WTC11 (cell line): ENCODE measurements at regions of chr6 and their contacts with region 1.

Region 1: DNA sequence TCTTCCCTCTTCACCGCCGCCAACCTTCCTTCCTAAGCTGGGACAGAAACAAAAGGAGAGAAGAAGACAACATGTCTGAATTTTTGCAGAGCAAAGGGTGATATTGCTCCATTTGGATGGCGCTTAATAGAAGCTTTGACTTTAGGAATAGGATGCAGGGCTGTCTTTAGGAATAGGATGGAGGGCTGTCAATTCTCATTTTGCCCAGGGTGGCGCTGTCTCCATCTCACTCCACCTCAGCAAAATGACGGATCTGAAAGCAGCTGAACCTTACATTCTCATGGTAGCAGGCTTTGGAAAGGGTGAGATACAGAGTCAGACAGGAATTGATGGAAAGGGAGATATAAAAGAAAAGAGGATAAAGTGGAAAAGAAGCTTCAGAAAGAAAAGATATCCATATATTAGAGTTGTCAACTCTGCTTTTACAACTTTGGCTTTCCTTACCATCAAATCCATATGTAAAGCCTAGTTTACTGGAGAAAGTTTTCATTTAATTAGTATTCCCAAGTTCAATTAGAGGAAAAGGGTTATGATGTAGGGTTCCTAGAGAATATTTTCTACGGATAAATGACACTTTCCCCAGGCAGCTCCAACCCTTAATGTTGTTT is 2.4 kb downstream of the MTCL3 start:
- DNase-seq: peak; percentile 69
- ATAC-seq: peak; percentile 33
- H3K4me3 Mint-ChIP-seq: peak overlapping the region; percentile 92
- H3K27ac Mint-ChIP-seq: peak overlapping the region; percentile 94
- H3K4me1 Mint-ChIP-seq: peaks cover 37% of the 10 kb centered on the region
- H3K27me3 Mint-ChIP-seq: peaks cover 26% of the 10 kb centered on the region
- CTCF ChIP-seq: peak; percentile 77

Region 2: GRCh38 chr6:127266178-127266891 is 250.4 kb before region 1 on chr6 and contains the start of gene RNF146:
- CTCF ChIA-PET with region 1: interaction called, 23 read pairs
- POLR2A ChIA-PET with region 1: interaction called, 17 read pairs
- DNase-seq: peak; percentile 73
- ATAC-seq: peak; percentile 70
- H3K4me3 Mint-ChIP-seq: peak within 1 kb of the TSS; percentile 99
- H3K27ac Mint-ChIP-seq: peak within 1 kb of the TSS; percentile 100
- H3K4me1 Mint-ChIP-seq: peaks cover 29% of the 10 kb centered on the region
- H3K27me3 Mint-ChIP-seq: no peaks in the 10 kb centered on the region; the same call in 1 of the 2 replicates
- CTCF ChIP-seq: 0 out of 2 replicates have a peak, but pooled peaks have one; percentile 34
- total RNA-seq, gene RNF146: 27.3 to 30.4 TPM (median 30.0 TPM) in 3 replicates

Region 3: DNA sequence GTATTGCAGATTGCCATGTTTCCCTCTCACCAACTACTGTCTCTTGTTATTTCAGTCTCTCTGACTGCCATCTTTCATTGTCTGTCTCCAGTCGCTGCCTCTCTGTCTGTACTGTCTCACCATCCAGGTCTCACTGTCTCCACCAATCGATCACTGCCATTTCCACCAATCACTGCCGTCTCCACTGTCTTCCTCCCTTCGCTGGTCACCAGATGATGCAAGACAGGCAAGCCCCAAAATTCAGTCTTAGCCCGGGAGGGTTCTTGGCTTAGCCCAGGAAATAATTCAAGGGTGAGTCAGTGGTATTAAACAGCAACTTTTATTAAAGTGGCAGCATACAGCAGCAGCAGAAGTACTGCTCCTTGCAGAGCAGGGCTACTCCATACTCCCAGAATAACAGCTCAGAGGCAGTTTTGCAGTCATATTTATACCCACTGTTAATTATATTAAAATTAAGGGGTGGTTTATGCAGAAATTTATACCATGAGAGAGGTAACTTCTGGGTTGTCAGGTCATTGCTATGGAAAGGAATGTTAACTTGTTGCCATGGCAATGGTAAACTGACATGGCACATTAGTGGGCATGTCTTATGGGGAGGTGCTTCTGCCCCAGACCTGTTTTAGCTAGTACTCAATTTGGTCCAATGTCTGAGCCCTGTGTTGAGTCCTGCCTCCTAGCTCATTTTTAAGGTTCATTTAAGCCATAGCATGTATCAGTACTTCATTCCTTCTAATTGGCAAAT is 150.3 kb before region 1 on chr6:
- CTCF ChIA-PET with region 1: no interaction called
- POLR2A ChIA-PET with region 1: no interaction called
- DNase-seq: no peak
- ATAC-seq: peak; percentile 79
- H3K4me3 Mint-ChIP-seq: no peak overlapping the region
- H3K27ac Mint-ChIP-seq: peak overlapping the region; percentile 15; the same call in 1 of the 2 replicates
- H3K4me1 Mint-ChIP-seq: peaks cover 4% of the 10 kb centered on the region; the same call in 1 of the 2 replicates
- H3K27me3 Mint-ChIP-seq: no peaks in the 10 kb centered on the region
- CTCF ChIP-seq: no peak

Region 4: DNA sequence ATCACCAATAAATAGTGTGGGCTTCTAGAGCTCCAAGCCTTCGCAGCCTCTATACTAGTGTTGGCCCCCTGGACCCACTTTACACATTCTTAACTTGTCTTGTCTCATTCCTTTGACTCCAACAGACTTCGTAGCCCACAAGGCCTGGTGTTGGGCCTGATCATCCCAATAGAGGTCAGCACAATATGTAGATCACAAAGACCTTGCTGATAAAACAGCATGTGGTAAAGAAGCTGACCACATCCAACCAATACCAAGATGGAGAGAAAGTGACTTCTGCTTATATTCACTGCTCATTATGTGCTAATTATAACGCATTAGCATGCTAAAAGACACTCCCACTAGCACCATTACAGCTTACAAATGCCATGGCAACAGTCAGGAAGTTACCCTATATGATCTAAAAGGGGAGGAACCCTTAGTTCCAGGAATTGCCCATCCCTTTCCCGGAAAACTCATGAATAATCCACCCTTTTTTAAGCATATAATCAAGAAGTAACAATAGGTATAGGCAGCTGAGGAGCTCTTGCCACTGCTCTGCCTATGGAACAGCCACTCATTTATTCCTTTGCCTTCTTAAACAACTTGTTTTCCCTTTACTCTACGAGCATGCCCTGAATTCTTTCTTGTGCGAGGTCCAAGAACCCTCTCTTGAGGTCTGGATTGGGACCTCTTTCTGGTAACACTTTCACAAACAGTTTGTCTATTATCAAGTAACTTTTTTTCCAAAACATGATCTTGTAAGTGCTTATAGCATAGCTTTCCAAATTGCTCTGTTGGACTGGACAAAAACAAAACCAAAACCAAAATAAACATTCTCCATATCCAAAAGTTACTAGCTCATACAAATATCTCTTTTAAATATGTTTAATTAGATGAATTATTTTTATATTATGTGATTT is 118.8 kb before region 1 on chr6:
- CTCF ChIA-PET with region 1: no interaction called
- POLR2A ChIA-PET with region 1: no interaction called
- DNase-seq: no peak
- ATAC-seq: no peak
- H3K4me3 Mint-ChIP-seq: no peak overlapping the region
- H3K27ac Mint-ChIP-seq: peak overlapping the region; percentile 31; the same call in 1 of the 2 replicates
- H3K4me1 Mint-ChIP-seq: peaks cover 3% of the 10 kb centered on the region
- H3K27me3 Mint-ChIP-seq: no peaks in the 10 kb centered on the region
- CTCF ChIP-seq: no peak

Region 5: DNA sequence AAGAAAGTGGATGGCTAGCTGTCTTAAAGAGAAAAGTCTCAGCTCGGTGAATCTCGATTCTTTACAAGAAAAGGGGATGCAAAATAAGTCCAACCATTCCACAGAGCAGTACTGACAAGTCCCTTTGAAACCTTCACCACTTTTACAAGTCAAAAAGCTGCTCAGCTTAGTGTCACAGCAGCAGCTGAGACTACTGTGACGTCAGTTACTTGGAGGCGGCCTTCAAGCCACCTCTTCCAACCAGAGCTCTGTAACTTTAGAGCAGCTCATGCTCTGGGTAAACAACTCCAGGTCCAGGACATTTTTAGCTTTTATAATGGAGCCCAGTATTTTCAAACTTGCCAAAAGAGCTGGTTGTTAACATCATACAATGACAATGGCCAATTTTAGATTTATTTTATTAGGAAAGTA is 57.5 kb before region 1 on chr6 and contains the start of gene KIAA0408:
- CTCF ChIA-PET with region 1: interaction called, 55 read pairs
- POLR2A ChIA-PET with region 1: interaction called, 10 read pairs
- DNase-seq: peak; percentile 51
- ATAC-seq: peak; percentile 97
- H3K4me3 Mint-ChIP-seq: peak within 1 kb of the TSS; percentile 18
- H3K27ac Mint-ChIP-seq: peak within 1 kb of the TSS; percentile 79
- H3K4me1 Mint-ChIP-seq: peaks cover 51% of the 10 kb centered on the region
- H3K27me3 Mint-ChIP-seq: no peaks in the 10 kb centered on the region
- CTCF ChIP-seq: no peak
- total RNA-seq, gene KIAA0408: 7.5 to 12.2 TPM (median 9.1 TPM) in 3 replicates

Region 6: GRCh38 chr6:127471379-127472255 is 45.2 kb before region 1 on chr6:
- CTCF ChIA-PET with region 1: interaction called, 44 read pairs
- POLR2A ChIA-PET with region 1: interaction called, 9 read pairs
- DNase-seq: no peak
- ATAC-seq: no peak
- H3K4me3 Mint-ChIP-seq: no peak overlapping the region
- H3K27ac Mint-ChIP-seq: peak overlapping the region; percentile 50
- H3K4me1 Mint-ChIP-seq: peaks cover 18% of the 10 kb centered on the region
- H3K27me3 Mint-ChIP-seq: no peaks in the 10 kb centered on the region
- CTCF ChIP-seq: no peak

Region 7: GRCh38 chr6:127496471-127496870 is 20.3 kb before region 1 on chr6:
- CTCF ChIA-PET with region 1: interaction called, 33 read pairs
- POLR2A ChIA-PET with region 1: interaction called, 3 read pairs
- DNase-seq: no peak
- ATAC-seq: no peak
- H3K4me3 Mint-ChIP-seq: no peak overlapping the region
- H3K27ac Mint-ChIP-seq: no peak overlapping the region
- H3K4me1 Mint-ChIP-seq: no peaks in the 10 kb centered on the region
- H3K27me3 Mint-ChIP-seq: no peaks in the 10 kb centered on the region
- CTCF ChIP-seq: no peak

Region 8: GRCh38 chr6:127533011-127533410 is 16.2 kb after region 1 on chr6:
- CTCF ChIA-PET with region 1: interaction called, 38 read pairs
- POLR2A ChIA-PET with region 1: interaction called, 5 read pairs
- DNase-seq: no peak
- ATAC-seq: no peak
- H3K4me3 Mint-ChIP-seq: no peak overlapping the region
- H3K27ac Mint-ChIP-seq: no peak overlapping the region
- H3K4me1 Mint-ChIP-seq: no peaks in the 10 kb centered on the region
- H3K27me3 Mint-ChIP-seq: no peaks in the 10 kb centered on the region
- CTCF ChIP-seq: no peak

Region 9: GRCh38 chr6:127547215-127547614 is 30.4 kb after region 1 on chr6:
- CTCF ChIA-PET with region 1: interaction called, 11 read pairs
- POLR2A ChIA-PET with region 1: no interaction called
- DNase-seq: peak; percentile 44
- ATAC-seq: peak; percentile 69
- H3K4me3 Mint-ChIP-seq: no peak overlapping the region
- H3K27ac Mint-ChIP-seq: no peak overlapping the region
- H3K4me1 Mint-ChIP-seq: peaks cover 3% of the 10 kb centered on the region; the same call in 1 of the 2 replicates
- H3K27me3 Mint-ChIP-seq: no peaks in the 10 kb centered on the region
- CTCF ChIP-seq: peak; percentile 31; the same call in 1 of the 2 replicates